Activated CD4-positive, alpha-beta memory T cell treated with anti-CD3 and anti-CD28 coated beads for 36 hours (primary cell): ENCODE measurements at regions of chr11 and their contacts with region 1.

Region 1: GRCh38 chr11:102390667-102391465 is 43.9 kb downstream of the BIRC2 start:
- DNase-seq: peak; percentile 72
- H3K4me3 Mint-ChIP-seq: no peak overlapping the region
- H3K27ac Mint-ChIP-seq: peak overlapping the region; percentile 60
- H3K4me1 Mint-ChIP-seq: peaks cover 40% of the 10 kb centered on the region
- H3K27me3 Mint-ChIP-seq: no peaks in the 10 kb centered on the region

Region 2: DNA sequence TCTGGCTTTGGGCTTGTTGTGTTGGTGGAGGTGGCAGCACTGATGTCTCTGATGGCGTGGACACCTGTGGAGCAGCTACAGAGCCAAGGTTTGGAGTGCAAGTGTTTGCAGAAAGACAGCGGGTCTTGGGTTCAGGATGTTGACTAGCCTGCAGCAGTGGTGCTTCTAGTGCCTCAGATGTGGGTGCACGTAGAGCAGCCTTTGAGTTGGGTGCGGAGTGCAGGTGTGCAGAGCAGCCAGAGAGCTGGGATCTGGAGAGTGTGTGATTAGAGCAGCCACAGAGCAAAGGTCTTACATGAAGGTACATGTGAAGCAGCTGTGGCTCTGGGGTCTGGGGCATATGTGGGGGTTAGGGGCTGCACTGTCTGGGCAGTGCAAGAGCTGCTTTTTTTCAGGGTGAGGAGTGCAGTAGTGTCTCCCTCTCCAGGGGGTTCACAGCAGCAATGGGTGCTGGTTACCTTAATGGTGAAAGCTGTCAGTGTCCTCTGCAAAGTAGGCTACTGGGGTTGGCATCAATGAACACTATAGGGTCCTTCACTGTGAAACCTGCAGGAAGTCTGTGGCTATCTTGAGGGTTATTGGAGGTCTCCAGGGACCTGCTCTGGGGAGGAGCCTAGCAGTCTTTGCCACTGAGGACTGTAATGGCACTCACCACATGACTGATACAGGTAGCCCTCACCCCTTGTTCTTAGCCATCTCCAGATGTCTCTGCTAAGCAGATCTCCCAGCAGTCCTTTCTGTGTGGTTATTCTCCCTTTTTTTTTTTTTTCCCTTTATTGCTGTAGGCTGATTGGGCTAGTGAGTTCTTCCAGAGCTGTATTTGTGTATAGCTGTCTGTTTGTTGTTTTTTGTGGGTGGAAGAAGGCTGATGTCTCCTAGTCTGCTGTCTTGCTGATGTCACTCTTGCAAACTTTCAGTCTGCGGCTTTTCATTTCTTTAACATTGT is 29.5 kb before region 1 on chr11:
- CTCF ChIA-PET with region 1: interaction called, 10 read pairs
- POLR2A ChIA-PET with region 1: no interaction called
- intact Hi-C with region 1: no loop called
- DNase-seq: peak; percentile 26
- H3K4me3 Mint-ChIP-seq: peak overlapping the region; percentile 10
- H3K27ac Mint-ChIP-seq: peak overlapping the region; percentile 51
- H3K4me1 Mint-ChIP-seq: peaks cover 49% of the 10 kb centered on the region
- H3K27me3 Mint-ChIP-seq: no peaks in the 10 kb centered on the region

Region 3: DNA sequence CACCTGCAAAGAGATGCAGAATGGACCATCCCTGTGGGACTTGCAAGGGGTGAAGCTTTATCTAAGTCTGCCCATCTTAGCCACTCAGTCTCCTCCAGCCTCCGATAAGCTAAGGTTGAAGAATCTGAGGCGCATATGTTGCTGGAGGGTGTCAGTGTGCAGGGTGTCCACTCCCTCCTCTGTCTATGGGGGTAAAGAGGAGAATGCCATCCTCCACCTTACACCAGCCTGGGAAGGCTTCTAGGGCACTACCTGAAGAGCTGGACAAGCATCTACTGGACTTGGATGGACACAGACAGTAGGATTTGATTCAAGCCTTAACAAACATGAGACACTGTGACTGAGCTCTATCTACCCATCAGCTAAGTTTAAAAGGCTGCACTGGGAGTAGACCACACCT is 15.2 kb after region 1 on chr11:
- CTCF ChIA-PET with region 1: interaction called, 28 read pairs
- POLR2A ChIA-PET with region 1: no interaction called
- intact Hi-C with region 1: no loop called
- DNase-seq: no peak
- H3K4me3 Mint-ChIP-seq: no peak overlapping the region
- H3K27ac Mint-ChIP-seq: no peak overlapping the region
- H3K4me1 Mint-ChIP-seq: peaks cover 75% of the 10 kb centered on the region
- H3K27me3 Mint-ChIP-seq: no peaks in the 10 kb centered on the region

Region 4: DNA sequence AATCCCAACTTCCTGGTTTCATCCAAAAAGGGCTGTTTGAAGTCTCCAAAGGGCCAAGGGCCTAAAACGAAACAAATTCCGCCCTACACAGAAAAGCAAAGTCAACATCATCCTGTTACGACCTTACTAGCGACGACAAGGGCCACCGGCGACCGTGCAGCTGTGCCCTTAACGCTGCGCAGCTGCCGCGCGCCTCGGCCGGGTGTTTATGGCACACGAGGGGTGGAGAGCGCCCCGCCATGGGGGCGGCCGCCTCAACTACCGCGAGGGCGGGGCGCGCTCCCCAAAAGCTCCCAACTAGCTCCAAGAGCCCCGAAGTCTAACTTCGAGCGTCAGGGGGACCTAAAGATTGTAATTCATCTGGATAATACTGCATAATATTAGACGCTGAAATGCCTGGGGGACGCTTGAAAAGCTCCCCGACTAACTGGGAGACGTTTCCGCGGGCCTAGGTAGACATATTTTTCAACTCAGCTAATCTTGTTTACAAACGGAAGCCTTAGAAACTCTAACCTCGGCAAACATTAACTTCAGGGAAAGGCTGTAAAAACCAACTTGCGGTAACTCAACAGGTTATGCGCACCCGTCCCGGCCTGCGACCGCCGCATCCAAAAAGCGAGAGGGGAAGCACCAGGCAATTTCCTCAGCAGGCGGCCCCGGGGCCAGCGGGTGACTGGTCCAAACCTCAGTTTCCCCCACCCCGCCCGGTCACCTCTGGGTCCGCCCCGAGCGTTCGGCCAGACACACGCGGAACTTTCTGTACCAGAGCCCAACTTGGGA is 61.0 kb after region 1 on chr11:
- CTCF ChIA-PET with region 1: interaction called, 16 read pairs
- POLR2A ChIA-PET with region 1: interaction called, 4 read pairs
- intact Hi-C with region 1: loop called (anchors 1 kb)
- DNase-seq: peak; percentile 86
- H3K4me3 Mint-ChIP-seq: peak overlapping the region; percentile 84
- H3K27ac Mint-ChIP-seq: peak overlapping the region; percentile 96
- H3K4me1 Mint-ChIP-seq: peaks cover 75% of the 10 kb centered on the region
- H3K27me3 Mint-ChIP-seq: no peaks in the 10 kb centered on the region

Region 5: DNA sequence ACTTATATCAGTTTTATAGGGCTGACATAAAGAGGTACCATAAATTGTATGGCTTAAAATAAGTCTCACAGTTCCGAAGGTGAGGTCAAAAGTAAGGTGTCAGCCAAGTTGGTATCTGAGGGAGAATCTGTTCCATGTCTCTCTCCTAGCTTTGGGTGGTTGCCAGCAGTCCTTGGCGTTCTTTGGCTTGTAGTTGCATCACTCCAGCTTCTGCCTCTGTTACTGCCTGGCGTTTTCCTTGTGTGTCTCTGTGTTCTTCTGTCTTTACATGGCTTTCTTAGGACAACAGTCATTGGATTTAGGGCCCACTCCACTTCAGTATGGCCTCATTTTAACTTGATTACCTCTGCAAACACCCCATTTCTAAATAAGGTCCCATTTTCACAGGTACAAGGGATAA is 123.0 kb after region 1 on chr11:
- CTCF ChIA-PET with region 1: interaction called, 20 read pairs
- POLR2A ChIA-PET with region 1: no interaction called
- intact Hi-C with region 1: no loop called
- DNase-seq: no peak
- H3K4me3 Mint-ChIP-seq: no peak overlapping the region
- H3K27ac Mint-ChIP-seq: no peak overlapping the region
- H3K4me1 Mint-ChIP-seq: no peaks in the 10 kb centered on the region
- H3K27me3 Mint-ChIP-seq: no peaks in the 10 kb centered on the region

Region 6: GRCh38 chr11:103274025-103274424 is 883.2 kb after region 1 on chr11:
- CTCF ChIA-PET with region 1: no interaction called
- POLR2A ChIA-PET with region 1: no interaction called
- intact Hi-C with region 1: no loop called
- DNase-seq: no peak
- H3K4me3 Mint-ChIP-seq: no peak overlapping the region
- H3K27ac Mint-ChIP-seq: no peak overlapping the region
- H3K4me1 Mint-ChIP-seq: no peaks in the 10 kb centered on the region
- H3K27me3 Mint-ChIP-seq: no peaks in the 10 kb centered on the region